AG04449 (cell line): ENCODE measurements at regions of chr2 and their contacts with region 1.

Region 1: GRCh38 chr2:96024336-96025193 is 10.2 kb downstream of the GPAT2 start:
- DNase-seq: no peak
- H3K4me3 ChIP-seq: no peak overlapping the region
- CTCF ChIP-seq: no peak

Region 2: GRCh38 chr2:96265840-96266679 is 241.5 kb after region 1 on chr2 and contains the starts of genes CIAO1 and TMEM127:
- CTCF ChIA-PET with region 1: interaction called, 12 read pairs
- POLR2A ChIA-PET with region 1: no interaction called
- DNase-seq: peak; percentile 68
- H3K4me3 ChIP-seq: peak within 1 kb of the TSS; percentile 93
- CTCF ChIP-seq: peak; percentile 48